ENCODE measurements at regions of chr6 and their contacts with region 1.

Region 1: DNA sequence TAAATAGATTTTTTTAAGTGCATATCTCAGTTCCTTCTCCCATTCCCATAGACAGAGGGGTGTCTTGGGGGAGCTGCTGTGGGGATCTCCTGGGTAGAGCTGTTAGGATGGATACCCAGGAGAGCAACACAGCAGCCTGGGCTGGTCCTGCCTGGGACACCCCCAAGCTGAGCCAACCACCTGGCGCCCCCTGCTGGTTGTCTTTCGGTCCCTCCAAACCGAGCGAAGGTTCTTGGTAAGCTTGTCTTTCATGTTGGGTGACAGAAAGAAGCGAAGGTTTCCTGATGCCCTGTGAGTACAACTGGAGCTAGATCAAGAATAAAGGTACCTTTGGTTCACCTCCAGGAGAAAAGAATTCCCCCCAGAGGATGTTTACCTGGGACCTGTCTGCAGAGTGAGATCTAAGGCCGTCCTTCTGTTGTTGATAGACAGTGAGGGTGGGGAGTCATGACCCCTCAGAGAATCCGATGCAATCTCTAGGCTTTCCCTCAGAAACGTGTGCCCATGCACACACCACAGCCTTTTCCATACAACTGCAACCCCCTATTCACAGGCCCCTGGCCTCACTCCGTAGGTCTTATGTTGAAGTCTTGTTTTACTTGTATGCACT is 50.8 kb downstream of the SNX9 start:
- DNase-seq: peak; percentile 92
- H3K4me3 Mint-ChIP-seq: no peak overlapping the region
- H3K27ac Mint-ChIP-seq: no peak overlapping the region
- H3K4me1 Mint-ChIP-seq: peaks cover 30% of the 10 kb centered on the region
- H3K27me3 Mint-ChIP-seq: no peaks in the 10 kb centered on the region

Region 2: GRCh38 chr6:157644043-157644810 is 229.6 kb before region 1 on chr6:
- CTCF ChIA-PET with region 1: interaction called, 4 read pairs
- POLR2A ChIA-PET with region 1: no interaction called
- intact Hi-C with region 1: loop called (anchors 1 kb)
- DNase-seq: peak; percentile 53
- H3K4me3 Mint-ChIP-seq: no peak overlapping the region
- H3K27ac Mint-ChIP-seq: no peak overlapping the region
- H3K4me1 Mint-ChIP-seq: peaks cover 13% of the 10 kb centered on the region
- H3K27me3 Mint-ChIP-seq: no peaks in the 10 kb centered on the region

Region 3: DNA sequence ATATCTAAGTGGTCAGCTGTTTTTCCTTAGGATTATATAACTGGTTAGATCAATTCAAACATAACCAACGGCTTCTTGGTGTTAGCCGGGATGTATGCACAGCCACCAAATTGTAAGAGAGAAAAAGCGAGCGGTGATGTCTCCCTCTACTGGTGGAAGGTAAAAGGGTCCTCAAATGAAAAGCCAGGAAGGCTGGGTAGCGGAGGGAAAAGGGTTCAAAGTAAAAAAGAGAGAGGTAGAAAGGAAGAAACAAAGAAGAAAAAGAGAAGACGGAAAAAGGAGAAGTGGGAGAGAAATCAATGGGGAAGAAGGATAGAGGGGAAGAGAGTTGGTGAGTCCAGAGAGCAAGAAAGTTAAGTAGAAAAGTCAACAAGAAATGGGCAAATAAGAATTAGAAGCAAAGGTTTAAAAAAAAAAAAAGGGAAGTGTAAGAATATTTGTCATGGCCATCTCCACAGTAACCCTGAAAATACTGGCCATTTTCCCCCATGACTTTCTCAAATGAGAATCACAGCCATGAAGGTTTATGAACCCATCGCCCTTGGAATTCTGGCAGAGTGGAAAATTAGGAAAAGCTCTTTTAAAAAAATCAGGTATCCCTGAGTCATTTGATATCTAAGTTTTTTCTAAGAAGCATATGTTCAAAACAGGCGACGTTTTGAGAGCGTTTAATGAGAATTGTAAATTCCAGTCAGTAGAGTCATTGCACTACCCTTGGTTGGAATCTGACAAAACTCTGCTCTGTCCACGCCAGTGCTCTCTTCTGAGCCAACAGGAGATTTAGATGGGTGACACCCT is 206.4 kb before region 1 on chr6:
- CTCF ChIA-PET with region 1: interaction called, 34 read pairs
- POLR2A ChIA-PET with region 1: no interaction called
- intact Hi-C with region 1: no loop called
- DNase-seq: peak; percentile 68
- H3K4me3 Mint-ChIP-seq: no peak overlapping the region
- H3K27ac Mint-ChIP-seq: no peak overlapping the region
- H3K4me1 Mint-ChIP-seq: peaks cover 13% of the 10 kb centered on the region
- H3K27me3 Mint-ChIP-seq: peaks cover 7% of the 10 kb centered on the region

Region 4: GRCh38 chr6:157830354-157831017 is 43.4 kb before region 1 on chr6:
- CTCF ChIA-PET with region 1: interaction called, 11 read pairs
- POLR2A ChIA-PET with region 1: no interaction called
- intact Hi-C with region 1: loop called (anchors 5 kb)
- DNase-seq: no peak
- H3K4me3 Mint-ChIP-seq: peak overlapping the region; percentile 20
- H3K27ac Mint-ChIP-seq: peak overlapping the region; percentile 62
- H3K4me1 Mint-ChIP-seq: peaks cover 69% of the 10 kb centered on the region
- H3K27me3 Mint-ChIP-seq: no peaks in the 10 kb centered on the region

Region 5: GRCh38 chr6:157845493-157846259 is 28.2 kb before region 1 on chr6:
- CTCF ChIA-PET with region 1: interaction called, 21 read pairs
- POLR2A ChIA-PET with region 1: no interaction called
- intact Hi-C with region 1: no loop called
- DNase-seq: no peak
- H3K4me3 Mint-ChIP-seq: no peak overlapping the region
- H3K27ac Mint-ChIP-seq: peak overlapping the region; percentile 63
- H3K4me1 Mint-ChIP-seq: peaks cover 91% of the 10 kb centered on the region
- H3K27me3 Mint-ChIP-seq: no peaks in the 10 kb centered on the region

Region 6: GRCh38 chr6:157861814-157862213 is 12.0 kb before region 1 on chr6:
- CTCF ChIA-PET with region 1: interaction called, 21 read pairs
- POLR2A ChIA-PET with region 1: no interaction called
- intact Hi-C with region 1: no loop called
- DNase-seq: no peak
- H3K4me3 Mint-ChIP-seq: no peak overlapping the region
- H3K27ac Mint-ChIP-seq: no peak overlapping the region
- H3K4me1 Mint-ChIP-seq: peaks cover 68% of the 10 kb centered on the region
- H3K27me3 Mint-ChIP-seq: no peaks in the 10 kb centered on the region

Region 7: DNA sequence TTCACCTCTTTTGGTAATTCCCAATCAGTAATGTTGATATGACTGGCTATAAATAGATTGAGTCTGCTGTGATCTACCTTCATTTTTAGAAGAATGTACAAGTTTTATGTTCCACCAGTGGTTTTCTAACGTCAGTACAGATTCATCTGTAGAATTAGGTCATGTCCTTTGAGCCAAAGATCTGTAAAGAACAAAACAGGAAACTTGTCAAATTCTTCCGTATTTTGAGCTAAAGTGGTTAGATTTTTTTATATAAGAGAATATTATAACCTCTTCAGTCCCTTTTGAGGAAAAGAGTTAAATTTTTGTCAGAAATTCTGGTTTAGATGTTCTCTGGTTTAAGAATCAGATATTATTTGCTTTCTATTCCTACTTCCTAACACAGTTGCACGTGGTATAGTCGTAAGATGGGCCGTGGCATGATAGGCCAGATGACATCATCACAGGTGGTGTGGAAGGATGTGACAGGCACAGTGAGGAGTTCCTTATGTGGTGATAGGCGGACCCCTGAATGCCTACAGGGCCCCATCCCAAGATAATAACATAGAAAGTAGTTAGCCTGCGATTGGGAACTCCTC is 11.5 kb after region 1 on chr6:
- CTCF ChIA-PET with region 1: interaction called, 27 read pairs
- POLR2A ChIA-PET with region 1: interaction called, 5 read pairs
- intact Hi-C with region 1: no loop called
- DNase-seq: peak; percentile 75
- H3K4me3 Mint-ChIP-seq: no peak overlapping the region
- H3K27ac Mint-ChIP-seq: peak overlapping the region; percentile 94
- H3K4me1 Mint-ChIP-seq: peaks cover 68% of the 10 kb centered on the region
- H3K27me3 Mint-ChIP-seq: no peaks in the 10 kb centered on the region